Dorsolateral prefrontal cortex (tissue), 120 donors: ENCODE measurements at regions of chr1 and their contacts with region 1.

Region 1: GRCh38 chr1:198771563-198772153 is 132.8 kb downstream of the PTPRC start:
- DNase-seq: no peak
- H3K4me3 ChIP-seq: no peak overlapping the region
- H3K27ac ChIP-seq: no peak overlapping the region
- H3K27me3 ChIP-seq: no peaks in the 10 kb centered on the region
- CTCF ChIP-seq: peak; percentile 1 to 78 (median 60)

Region 2: DNA sequence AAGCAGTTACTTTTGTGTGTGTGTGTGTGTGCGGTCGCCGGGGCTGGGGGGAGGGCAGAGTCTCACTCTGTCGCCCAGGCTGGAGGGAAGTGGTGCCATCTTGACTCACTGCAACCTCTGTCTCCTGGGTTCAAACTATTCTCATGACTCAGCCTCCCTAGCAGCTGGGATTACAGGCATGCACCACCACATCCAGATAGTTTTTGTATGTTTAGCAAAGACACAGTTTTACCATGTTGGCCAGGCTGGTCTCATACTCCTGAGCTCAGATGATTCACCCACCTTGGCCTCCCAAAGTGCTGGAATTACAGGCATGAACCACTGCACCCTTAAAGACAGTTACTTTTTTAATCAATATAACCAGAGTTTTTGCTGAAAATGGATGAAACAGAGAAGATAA is 74.2 kb after region 1 on chr1:
- intact Hi-C with region 1: loop called in 1 of 2 experiments (anchors 5 kb)
- DNase-seq: no peak
- H3K4me3 ChIP-seq: no peak overlapping the region
- H3K27ac ChIP-seq: peak overlapping the region in 11 of 59 donors; percentile 0 to 65 (median 30)
- H3K27me3 ChIP-seq: no peaks in the 10 kb centered on the region
- CTCF ChIP-seq: no peak

Region 3: GRCh38 chr1:198903203-198903602 is 131.5 kb after region 1 on chr1:
- intact Hi-C with region 1: loop called in 1 of 2 experiments (anchors 10 kb)
- DNase-seq: peak; percentile 19 to 85 (median 64)
- H3K4me3 ChIP-seq: peak overlapping the region in 19 of 59 donors; percentile 0 to 45 (median 18)
- H3K27ac ChIP-seq: peak overlapping the region in 47 of 59 donors; percentile 3 to 79 (median 58)
- H3K27me3 ChIP-seq: no peaks in the 10 kb centered on the region
- CTCF ChIP-seq: peak in 5 of 56 donors; percentile 16 to 30 (median 24)

Region 4: DNA sequence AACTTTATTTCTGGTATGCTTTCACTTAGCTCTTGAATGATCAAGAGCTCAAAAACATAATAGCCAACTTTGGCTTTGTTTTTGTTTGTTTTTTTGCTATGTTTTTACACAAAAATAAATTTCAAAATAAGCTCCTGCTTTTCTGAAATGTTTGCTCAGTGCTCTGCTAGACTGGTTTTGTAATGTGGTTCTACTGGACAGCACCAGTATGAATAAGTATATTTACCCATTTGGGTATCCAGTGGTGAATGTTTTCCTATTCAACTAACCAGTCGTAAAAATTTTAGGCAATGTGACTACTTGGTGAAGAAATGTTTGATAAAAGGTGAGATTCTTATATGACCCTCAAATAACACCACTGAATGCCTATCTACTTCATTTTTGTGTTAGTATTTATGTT is 175.8 kb after region 1 on chr1:
- intact Hi-C with region 1: no loop called
- DNase-seq: no peak
- H3K4me3 ChIP-seq: no peak overlapping the region
- H3K27ac ChIP-seq: no peak overlapping the region
- H3K27me3 ChIP-seq: no peaks in the 10 kb centered on the region
- CTCF ChIP-seq: no peak